ENCODE measurements at regions of chr19 and their contacts with region 1.

Region 1: DNA sequence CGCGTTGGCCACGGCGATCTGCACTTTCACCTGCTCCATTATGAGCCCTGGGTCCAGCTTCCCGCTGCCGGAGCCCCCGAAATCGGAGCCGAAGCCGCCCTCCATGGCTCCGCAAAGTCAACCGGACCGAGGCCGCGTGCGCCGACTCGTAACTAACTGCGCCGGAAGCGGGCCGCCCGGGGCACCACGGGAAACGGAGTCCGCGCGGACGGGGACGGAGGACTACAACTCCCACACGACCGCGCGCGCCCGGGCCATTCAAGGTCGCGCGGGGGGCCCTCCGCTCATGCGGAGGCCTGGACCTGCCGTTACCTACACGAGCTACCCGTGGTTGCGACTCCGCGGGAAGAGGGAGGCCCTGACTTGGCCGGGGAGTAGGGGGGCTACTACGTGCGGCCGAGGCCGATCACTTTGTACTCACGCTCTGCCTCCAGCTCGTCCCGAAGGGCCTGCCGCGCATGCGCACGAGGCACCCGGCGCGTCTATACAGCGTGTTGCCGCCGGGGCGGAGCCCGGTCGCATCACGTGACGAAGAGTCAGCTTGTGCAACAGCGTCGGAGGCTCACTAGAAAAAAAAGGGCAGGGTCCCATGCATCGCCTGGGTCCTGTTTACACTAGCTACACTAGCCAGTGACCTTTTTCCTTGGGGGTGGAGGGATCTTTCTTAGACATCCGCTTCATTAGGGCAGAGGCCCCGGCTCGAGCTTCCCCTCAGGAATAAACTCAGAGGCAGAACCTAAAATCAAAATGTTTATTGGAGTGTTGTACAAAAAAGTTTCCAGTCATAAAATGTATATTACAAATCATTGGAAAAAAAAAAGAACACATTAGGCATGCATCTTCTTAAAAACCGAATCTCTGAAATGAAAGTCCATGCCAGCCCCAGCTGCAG is at the start of gene TIMM13:
- DNase-seq: peak; percentile 94
- ATAC-seq: peak; percentile 82
- H3K4me3 ChIP-seq: peak within 1 kb of the TSS; percentile 71 to 91 (median 90)
- H3K27ac ChIP-seq: peak within 1 kb of the TSS; percentile 98
- H3K4me1 ChIP-seq: peaks cover 23% of the 10 kb centered on the region
- H3K27me3 ChIP-seq: no peaks in the 10 kb centered on the region
- CTCF ChIP-seq: no peak; the same call in 1 of the 2 replicates
- EP300 ChIP-seq: peak in 1 of 2 experiments; percentile 53; a peak in 2 of 4 replicates
- POLR2A ChIP-seq: peak; percentile 76 to 78; a peak in 3 of 4 replicates
- RAD21 ChIP-seq: peak; percentile 55
- total RNA-seq, gene TIMM13: 108 and 116 TPM in 2 replicates

Region 2: GRCh38 chr19:2391118-2391725 is 36.5 kb before region 1 on chr19:
- CTCF ChIA-PET with region 1: no interaction called
- POLR2A ChIA-PET with region 1: interaction called, 60 read pairs
- in situ Hi-C with region 1: no loop called
- intact Hi-C with region 1: no loop called
- DNase-seq: peak; percentile 72
- ATAC-seq: no peak
- H3K4me3 ChIP-seq: no peak overlapping the region
- H3K27ac ChIP-seq: no peak overlapping the region
- H3K4me1 ChIP-seq: peaks cover 49% of the 10 kb centered on the region
- H3K27me3 ChIP-seq: peaks cover 2 to 9% of the 10 kb centered on the region in 2 experiments; a peak in 3 of 5 replicates
- CTCF ChIP-seq: peak; percentile 79
- EP300 ChIP-seq: no peak
- POLR2A ChIP-seq: no peak
- RAD21 ChIP-seq: no peak

Region 3: DNA sequence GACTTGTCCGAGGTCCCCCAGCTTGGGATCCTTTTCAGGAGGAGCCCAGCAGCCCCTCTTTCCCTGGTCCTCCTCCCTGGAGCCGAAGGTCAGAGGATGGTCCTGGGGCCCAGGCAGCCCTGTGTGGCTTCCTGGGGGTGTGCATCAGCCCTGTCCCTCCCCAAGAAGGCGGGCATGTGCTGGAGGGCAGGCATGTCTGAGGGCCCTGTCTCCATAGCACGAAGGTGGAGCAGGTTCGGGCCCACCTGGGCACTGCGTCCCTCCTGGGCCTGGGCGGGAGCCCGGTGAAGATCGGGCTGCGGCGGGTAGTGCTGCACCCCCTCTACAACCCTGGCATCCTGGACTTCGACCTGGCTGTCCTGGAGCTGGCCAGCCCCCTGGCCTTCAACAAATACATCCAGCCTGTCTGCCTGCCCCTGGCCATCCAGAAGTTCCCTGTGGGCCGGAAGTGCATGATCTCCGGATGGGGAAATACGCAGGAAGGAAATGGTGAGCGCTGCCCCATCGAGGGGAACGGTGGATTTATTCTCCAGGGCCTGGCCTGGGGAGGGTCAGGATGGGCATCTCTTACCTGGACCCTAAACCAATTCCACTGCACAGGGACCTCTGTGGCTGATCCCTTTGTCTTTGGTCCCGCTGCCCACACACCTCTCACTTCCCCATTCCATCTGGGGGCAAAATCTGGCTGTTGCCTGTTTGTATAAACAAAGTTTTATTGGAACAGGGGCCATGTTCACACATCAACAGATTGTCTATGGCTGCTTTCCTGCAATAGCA is 11.2 kb before region 1 on chr19:
- CTCF ChIA-PET with region 1: no interaction called
- POLR2A ChIA-PET with region 1: interaction called, 40 read pairs
- in situ Hi-C with region 1: no loop called
- intact Hi-C with region 1: no loop called
- DNase-seq: peak; percentile 89
- ATAC-seq: peak; percentile 93
- H3K4me3 ChIP-seq: peak overlapping the region in 2 of 3 experiments; percentile 2 to 49; a peak in 1 of 6 replicates
- H3K27ac ChIP-seq: peak overlapping the region; percentile 78
- H3K4me1 ChIP-seq: peaks cover 26% of the 10 kb centered on the region
- H3K27me3 ChIP-seq: no peaks in the 10 kb centered on the region
- CTCF ChIP-seq: no peak
- EP300 ChIP-seq: peak in 1 of 2 experiments; percentile 35; a peak in 2 of 4 replicates
- POLR2A ChIP-seq: peak; percentile 68 to 81
- RAD21 ChIP-seq: peak; percentile 61; the same call in 1 of the 2 replicates

Region 4: DNA sequence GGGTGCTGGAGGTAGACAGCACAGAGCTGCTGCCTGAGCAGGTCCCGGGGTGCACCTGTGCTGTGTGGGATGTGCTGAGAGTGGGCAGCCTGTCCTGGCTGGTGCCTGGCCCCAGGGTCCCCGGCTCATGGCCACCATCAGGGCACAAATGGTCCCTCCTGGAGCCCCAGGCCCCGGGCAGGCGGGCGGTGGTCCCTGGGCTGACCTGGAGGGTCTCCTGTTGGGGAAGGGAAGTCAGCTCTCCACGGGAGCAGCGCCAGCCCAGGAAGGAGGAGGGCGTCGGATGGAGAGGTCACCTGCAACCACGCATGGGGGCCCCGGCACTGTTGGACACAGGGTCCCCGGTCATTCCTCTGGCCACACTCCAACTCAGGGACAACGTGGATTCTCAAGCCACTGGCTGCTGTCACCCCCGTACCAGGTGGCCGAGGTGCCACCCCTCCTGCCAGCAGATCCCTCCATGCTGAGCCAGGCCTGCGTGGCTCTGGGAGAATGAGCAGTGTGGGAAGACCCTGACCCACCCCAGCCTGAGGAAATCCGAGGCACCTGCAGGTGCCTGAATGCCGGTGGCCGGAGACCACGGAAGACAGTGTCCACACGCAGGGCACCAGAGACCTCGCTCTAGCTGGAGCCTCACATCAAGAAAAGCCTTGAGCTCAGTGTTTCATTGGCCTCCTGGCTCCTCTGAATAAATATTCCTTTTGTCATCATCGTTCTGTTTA is 15.6 kb after region 1 on chr19:
- CTCF ChIA-PET with region 1: no interaction called
- POLR2A ChIA-PET with region 1: interaction called, 15 read pairs
- in situ Hi-C with region 1: no loop called
- intact Hi-C with region 1: no loop called
- DNase-seq: no peak
- ATAC-seq: no peak
- H3K4me3 ChIP-seq: no peak overlapping the region
- H3K27ac ChIP-seq: no peak overlapping the region
- H3K4me1 ChIP-seq: no peaks in the 10 kb centered on the region
- H3K27me3 ChIP-seq: no peaks in the 10 kb centered on the region
- CTCF ChIP-seq: no peak
- EP300 ChIP-seq: no peak
- POLR2A ChIP-seq: no peak
- RAD21 ChIP-seq: no peak

Region 5: DNA sequence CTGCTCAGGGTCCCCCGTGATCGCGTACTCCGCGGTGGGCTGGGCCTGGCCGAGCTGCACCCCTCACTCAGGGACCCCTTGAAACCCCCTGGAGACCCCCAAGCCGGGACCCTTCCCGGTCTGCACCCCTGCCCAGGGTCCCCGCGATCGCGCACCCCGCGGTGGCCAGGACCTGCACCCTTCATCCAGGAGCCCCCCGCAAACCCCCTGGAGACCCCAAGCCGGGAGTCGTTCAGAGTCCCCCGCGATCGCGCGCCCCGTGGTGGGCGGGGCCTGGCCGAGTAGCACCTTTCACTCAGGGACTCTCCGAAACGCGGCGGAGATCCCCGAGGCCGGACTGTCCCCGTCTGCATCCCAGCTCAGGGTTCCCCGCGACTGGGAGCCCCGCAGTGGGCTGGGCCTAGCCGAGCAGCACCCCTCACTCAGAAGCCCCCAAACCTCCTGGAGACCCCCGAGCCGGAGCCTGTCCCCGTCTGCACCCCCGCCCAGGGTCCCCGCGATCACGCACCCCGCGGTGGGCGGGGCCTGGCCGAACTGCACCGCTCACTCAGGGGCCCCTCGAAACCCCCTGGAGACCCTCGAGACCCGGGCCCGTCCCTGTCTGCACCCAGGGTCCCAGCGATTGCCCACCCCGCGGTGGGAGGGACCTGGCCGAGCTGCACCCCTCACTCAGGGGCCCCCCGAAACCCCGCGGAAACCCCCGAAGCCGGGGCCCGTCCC is 28.3 kb after region 1 on chr19:
- CTCF ChIA-PET with region 1: no interaction called
- POLR2A ChIA-PET with region 1: interaction called, 49 read pairs
- in situ Hi-C with region 1: no loop called
- intact Hi-C with region 1: no loop called
- DNase-seq: no peak
- ATAC-seq: no peak
- H3K4me3 ChIP-seq: peak overlapping the region; percentile 84 to 95 (median 85)
- H3K27ac ChIP-seq: peak overlapping the region; percentile 64
- H3K4me1 ChIP-seq: peaks cover 49% of the 10 kb centered on the region
- H3K27me3 ChIP-seq: no peaks in the 10 kb centered on the region
- CTCF ChIP-seq: no peak
- EP300 ChIP-seq: no peak
- POLR2A ChIP-seq: no peak
- RAD21 ChIP-seq: no peak

Region 6: DNA sequence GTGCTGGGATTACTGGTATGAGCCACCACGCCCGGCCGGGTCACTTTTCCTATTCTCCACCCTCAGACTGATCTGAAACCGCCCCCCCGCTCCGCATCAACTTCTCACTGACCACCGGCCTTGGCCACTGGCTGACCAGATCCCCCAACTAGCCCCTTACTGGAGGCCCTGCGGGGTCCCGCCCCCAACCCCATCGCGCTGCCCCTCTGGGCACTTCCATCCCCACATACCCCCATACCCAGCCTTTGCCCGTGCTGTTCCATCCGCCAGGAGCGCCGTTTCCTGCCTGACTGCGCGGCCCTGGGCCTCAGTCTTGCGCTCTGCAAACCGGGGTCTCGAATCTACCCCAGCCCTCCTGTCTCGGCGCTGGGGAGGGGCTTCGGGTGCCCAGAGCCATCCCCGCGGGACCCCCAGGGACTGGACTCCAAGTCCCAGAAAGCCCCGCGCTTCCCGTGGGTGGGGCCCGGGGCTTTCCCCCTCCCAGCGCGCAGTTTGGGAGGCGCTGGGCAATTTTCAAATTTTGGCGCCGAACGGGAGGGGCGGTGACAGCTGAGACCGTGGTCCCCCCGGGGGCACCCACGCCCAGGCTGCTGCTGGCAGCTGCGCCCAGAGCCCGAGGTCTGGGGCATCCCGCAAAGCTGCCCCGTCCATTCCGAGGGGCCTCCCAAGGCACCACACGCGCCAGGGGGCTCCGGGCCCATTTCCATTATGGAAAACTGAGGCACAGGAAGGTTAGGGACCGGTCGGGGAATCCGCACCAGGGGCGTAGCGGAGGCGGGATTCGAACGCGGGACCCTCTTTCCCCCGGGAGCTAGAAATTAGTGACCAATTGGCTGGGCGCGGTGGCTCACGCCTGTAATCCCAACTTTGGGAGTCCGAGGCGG is 34.3 kb after region 1 on chr19:
- CTCF ChIA-PET with region 1: no interaction called
- POLR2A ChIA-PET with region 1: interaction called, 49 read pairs
- in situ Hi-C with region 1: no loop called
- intact Hi-C with region 1: loop called (anchors 2 kb)
- DNase-seq: no peak
- ATAC-seq: no peak
- H3K4me3 ChIP-seq: no peak overlapping the region
- H3K27ac ChIP-seq: no peak overlapping the region
- H3K4me1 ChIP-seq: peaks cover 59% of the 10 kb centered on the region
- H3K27me3 ChIP-seq: no peaks in the 10 kb centered on the region
- CTCF ChIP-seq: no peak
- EP300 ChIP-seq: no peak
- POLR2A ChIP-seq: no peak
- RAD21 ChIP-seq: no peak

Region 7: GRCh38 chr19:2578901-2579677 is 151.4 kb after region 1 on chr19:
- CTCF ChIA-PET with region 1: no interaction called
- POLR2A ChIA-PET with region 1: interaction called, 10 read pairs
- in situ Hi-C with region 1: no loop called
- intact Hi-C with region 1: no loop called
- DNase-seq: peak; percentile 90
- ATAC-seq: peak; percentile 80
- H3K4me3 ChIP-seq: peak overlapping the region; percentile 54 to 71 (median 61)
- H3K27ac ChIP-seq: peak overlapping the region; percentile 91
- H3K4me1 ChIP-seq: peaks cover 54% of the 10 kb centered on the region
- H3K27me3 ChIP-seq: no peaks in the 10 kb centered on the region
- CTCF ChIP-seq: peak; percentile 97
- EP300 ChIP-seq: peak in 1 of 2 experiments; percentile 44; a peak in 2 of 4 replicates
- POLR2A ChIP-seq: peak in 1 of 2 experiments; percentile 59; a peak in 2 of 4 replicates
- RAD21 ChIP-seq: peak; percentile 95

Measured in HepG2 (cell line).